Naive thymus-derived CD4-positive, alpha-beta T cell (primary cell): ENCODE measurements at regions of chr2 and their contacts with region 1.

Region 1: DNA sequence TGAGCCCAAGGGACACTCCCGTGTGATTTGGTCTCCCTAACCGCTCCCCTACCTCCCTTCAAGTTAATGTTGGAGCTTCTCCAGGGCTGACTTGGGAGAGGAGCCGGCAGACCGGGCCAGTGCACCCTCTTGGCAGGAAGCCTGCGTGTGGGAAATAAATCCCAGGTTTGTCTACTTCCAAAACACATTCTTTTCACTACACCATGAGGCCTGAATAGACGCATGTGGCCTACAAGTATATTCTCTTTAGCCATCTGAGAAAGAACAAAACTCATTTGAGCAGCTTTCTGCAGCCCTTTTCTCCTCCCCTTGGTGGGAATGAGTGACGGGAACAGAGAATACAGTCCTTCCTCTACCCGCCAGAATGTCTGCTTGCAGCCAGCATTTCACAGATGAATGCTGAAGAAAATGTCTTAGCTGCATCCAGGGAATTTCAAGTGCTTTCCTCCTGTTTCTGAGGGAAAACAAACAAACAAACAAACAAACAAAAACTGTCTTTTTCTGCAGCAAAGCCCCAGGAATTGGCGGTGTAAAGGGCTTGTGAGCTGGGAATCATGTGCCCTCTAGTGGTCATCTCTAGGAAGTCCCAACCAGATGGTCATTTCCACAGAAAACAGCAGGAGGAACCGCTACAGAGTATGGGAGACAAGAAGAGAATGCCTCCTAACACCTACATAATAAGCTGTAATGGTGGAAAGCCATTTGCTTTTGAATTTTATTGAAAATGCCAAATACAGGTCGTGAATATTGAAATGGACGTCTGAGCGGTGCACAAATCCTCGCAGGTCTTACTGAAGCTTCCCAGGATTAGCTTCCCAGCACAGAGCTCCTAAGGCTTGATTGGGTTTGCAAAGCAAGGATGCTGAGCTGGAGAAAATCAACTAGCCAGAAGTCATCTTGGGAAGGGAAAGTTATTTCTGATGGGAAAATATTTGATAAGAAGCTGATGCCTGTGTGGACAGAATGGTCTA is 41.2 kb upstream of the DAPL1 start:
- DNase-seq: peak in 5 of 9 donors; percentile 21 to 51 (median 42)
- ATAC-seq: peak; percentile 75
- H3K4me3 ChIP-seq: no peak overlapping the region
- H3K4me3 Mint-ChIP-seq: no peak overlapping the region
- H3K27ac ChIP-seq: no peak overlapping the region
- H3K27ac Mint-ChIP-seq: no peak overlapping the region
- H3K4me1 ChIP-seq: no peaks in the 10 kb centered on the region
- H3K4me1 Mint-ChIP-seq: no peaks in the 10 kb centered on the region
- H3K27me3 ChIP-seq: no peaks in the 10 kb centered on the region
- H3K27me3 Mint-ChIP-seq: peaks cover 0 to 29% (median 13%) of the 10 kb centered on the region in 5 donors

Region 2: GRCh38 chr2:157497638-157498314 is 1256.2 kb before region 1 on chr2:
- CTCF ChIA-PET with region 1: interaction called, 5 read pairs
- POLR2A ChIA-PET with region 1: no interaction called
- intact Hi-C with region 1: loop called in 1 of 2 experiments (anchors 1 kb)
- DNase-seq: peak in 7 of 9 donors; percentile 13 to 61 (median 49)
- ATAC-seq: peak; percentile 94
- H3K4me3 ChIP-seq: no peak overlapping the region
- H3K4me3 Mint-ChIP-seq: no peak overlapping the region
- H3K27ac ChIP-seq: no peak overlapping the region
- H3K27ac Mint-ChIP-seq: peak overlapping the region in 1 of 9 donors; percentile 29
- H3K4me1 ChIP-seq: peaks cover 0 to 8% of the 10 kb centered on the region in 2 donors
- H3K4me1 Mint-ChIP-seq: peaks cover 8 to 40% (median 37%) of the 10 kb centered on the region in 7 donors
- H3K27me3 ChIP-seq: no peaks in the 10 kb centered on the region
- H3K27me3 Mint-ChIP-seq: no peaks in the 10 kb centered on the region

Region 3: GRCh38 chr2:157722580-157723234 is 1031.2 kb before region 1 on chr2:
- CTCF ChIA-PET with region 1: no interaction called
- POLR2A ChIA-PET with region 1: no interaction called
- intact Hi-C with region 1: no loop called
- DNase-seq: peak in 1 of 9 donors; percentile 7
- ATAC-seq: no peak
- H3K4me3 ChIP-seq: no peak overlapping the region
- H3K4me3 Mint-ChIP-seq: no peak overlapping the region
- H3K27ac ChIP-seq: no peak overlapping the region
- H3K27ac Mint-ChIP-seq: no peak overlapping the region
- H3K4me1 ChIP-seq: no peaks in the 10 kb centered on the region
- H3K4me1 Mint-ChIP-seq: no peaks in the 10 kb centered on the region
- H3K27me3 ChIP-seq: no peaks in the 10 kb centered on the region
- H3K27me3 Mint-ChIP-seq: no peaks in the 10 kb centered on the region

Region 4: GRCh38 chr2:157777427-157777826 is 976.5 kb before region 1 on chr2:
- CTCF ChIA-PET with region 1: no interaction called
- POLR2A ChIA-PET with region 1: no interaction called
- intact Hi-C with region 1: loop called in 1 of 2 experiments (anchors 5 kb)
- DNase-seq: peak in 7 of 9 donors; percentile 12 to 57 (median 43)
- ATAC-seq: peak; percentile 57
- H3K4me3 ChIP-seq: no peak overlapping the region
- H3K4me3 Mint-ChIP-seq: no peak overlapping the region
- H3K27ac ChIP-seq: no peak overlapping the region
- H3K27ac Mint-ChIP-seq: no peak overlapping the region
- H3K4me1 ChIP-seq: peaks cover 0 to 3% of the 10 kb centered on the region in 2 donors
- H3K4me1 Mint-ChIP-seq: peaks cover 0 to 17% (median 13%) of the 10 kb centered on the region in 7 donors
- H3K27me3 ChIP-seq: no peaks in the 10 kb centered on the region
- H3K27me3 Mint-ChIP-seq: no peaks in the 10 kb centered on the region

Region 5: GRCh38 chr2:158034199-158034866 is 719.6 kb before region 1 on chr2:
- CTCF ChIA-PET with region 1: interaction called, 12 read pairs
- POLR2A ChIA-PET with region 1: no interaction called
- intact Hi-C with region 1: loop called in 1 of 2 experiments (anchors 1 kb)
- DNase-seq: peak in 2 of 9 donors; percentile 21
- ATAC-seq: peak; percentile 69
- H3K4me3 ChIP-seq: no peak overlapping the region
- H3K4me3 Mint-ChIP-seq: no peak overlapping the region
- H3K27ac ChIP-seq: no peak overlapping the region
- H3K27ac Mint-ChIP-seq: no peak overlapping the region
- H3K4me1 ChIP-seq: no peaks in the 10 kb centered on the region
- H3K4me1 Mint-ChIP-seq: no peaks in the 10 kb centered on the region
- H3K27me3 ChIP-seq: no peaks in the 10 kb centered on the region
- H3K27me3 Mint-ChIP-seq: peaks cover 0 to 44% (median 9%) of the 10 kb centered on the region in 5 donors

Region 6: GRCh38 chr2:158464426-158465281 is 289.3 kb before region 1 on chr2:
- CTCF ChIA-PET with region 1: no interaction called
- POLR2A ChIA-PET with region 1: no interaction called
- intact Hi-C with region 1: loop called (anchors 1 to 5 kb)
- DNase-seq: peak in 4 of 9 donors; percentile 10 to 25 (median 14)
- ATAC-seq: peak; percentile 76
- H3K4me3 ChIP-seq: no peak overlapping the region
- H3K4me3 Mint-ChIP-seq: no peak overlapping the region
- H3K27ac ChIP-seq: no peak overlapping the region
- H3K27ac Mint-ChIP-seq: no peak overlapping the region
- H3K4me1 ChIP-seq: no peaks in the 10 kb centered on the region
- H3K4me1 Mint-ChIP-seq: peaks cover 0 to 13% (median 7%) of the 10 kb centered on the region in 7 donors
- H3K27me3 ChIP-seq: no peaks in the 10 kb centered on the region
- H3K27me3 Mint-ChIP-seq: peaks cover 0 to 2% (median 0%) of the 10 kb centered on the region in 5 donors

Region 7: GRCh38 chr2:159518321-159519005 is 764.5 kb after region 1 on chr2:
- CTCF ChIA-PET with region 1: no interaction called
- POLR2A ChIA-PET with region 1: no interaction called
- intact Hi-C with region 1: no loop called
- DNase-seq: no peak
- ATAC-seq: no peak
- H3K4me3 ChIP-seq: no peak overlapping the region
- H3K4me3 Mint-ChIP-seq: no peak overlapping the region
- H3K27ac ChIP-seq: no peak overlapping the region
- H3K27ac Mint-ChIP-seq: peak overlapping the region in 2 of 9 donors; percentile 19 to 42
- H3K4me1 ChIP-seq: peaks cover 11 to 20% of the 10 kb centered on the region in 2 donors
- H3K4me1 Mint-ChIP-seq: peaks cover 9 to 29% (median 24%) of the 10 kb centered on the region in 7 donors
- H3K27me3 ChIP-seq: no peaks in the 10 kb centered on the region
- H3K27me3 Mint-ChIP-seq: no peaks in the 10 kb centered on the region